Posterior vena cava (tissue), 2 donors: ENCODE measurements at regions of chr11 and their contacts with region 1.

Region 1: DNA sequence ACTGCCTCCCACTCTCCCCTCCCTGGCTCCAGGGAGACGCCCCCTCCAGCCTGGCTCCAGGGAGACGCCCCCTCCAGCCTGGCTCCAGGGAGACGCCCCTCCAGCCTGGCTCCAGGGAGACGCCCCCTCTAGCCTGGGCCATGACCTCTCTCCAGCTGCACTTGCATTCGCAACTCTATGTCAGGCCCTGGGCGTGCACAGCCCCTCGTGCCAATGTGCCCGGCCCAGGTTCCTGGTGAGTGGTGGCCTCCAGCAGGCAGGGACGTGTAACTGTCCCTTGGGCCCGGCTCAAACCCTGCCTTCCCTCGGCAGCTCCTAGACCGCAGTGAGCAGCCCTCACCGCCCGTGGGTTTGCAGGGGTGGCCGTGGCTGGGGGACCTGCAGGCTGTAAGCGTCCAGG is 6.9 kb downstream of the MUC6 start:
- DNase-seq: no peak

Region 2: GRCh38 chr11:952406-953385 is 77.0 kb before region 1 on chr11:
- intact Hi-C with region 1: no loop called
- DNase-seq: no peak

Region 3: GRCh38 chr11:1073261-1073724 is 43.6 kb after region 1 on chr11:
- intact Hi-C with region 1: no loop called
- DNase-seq: peak; percentile 85

Region 4: DNA sequence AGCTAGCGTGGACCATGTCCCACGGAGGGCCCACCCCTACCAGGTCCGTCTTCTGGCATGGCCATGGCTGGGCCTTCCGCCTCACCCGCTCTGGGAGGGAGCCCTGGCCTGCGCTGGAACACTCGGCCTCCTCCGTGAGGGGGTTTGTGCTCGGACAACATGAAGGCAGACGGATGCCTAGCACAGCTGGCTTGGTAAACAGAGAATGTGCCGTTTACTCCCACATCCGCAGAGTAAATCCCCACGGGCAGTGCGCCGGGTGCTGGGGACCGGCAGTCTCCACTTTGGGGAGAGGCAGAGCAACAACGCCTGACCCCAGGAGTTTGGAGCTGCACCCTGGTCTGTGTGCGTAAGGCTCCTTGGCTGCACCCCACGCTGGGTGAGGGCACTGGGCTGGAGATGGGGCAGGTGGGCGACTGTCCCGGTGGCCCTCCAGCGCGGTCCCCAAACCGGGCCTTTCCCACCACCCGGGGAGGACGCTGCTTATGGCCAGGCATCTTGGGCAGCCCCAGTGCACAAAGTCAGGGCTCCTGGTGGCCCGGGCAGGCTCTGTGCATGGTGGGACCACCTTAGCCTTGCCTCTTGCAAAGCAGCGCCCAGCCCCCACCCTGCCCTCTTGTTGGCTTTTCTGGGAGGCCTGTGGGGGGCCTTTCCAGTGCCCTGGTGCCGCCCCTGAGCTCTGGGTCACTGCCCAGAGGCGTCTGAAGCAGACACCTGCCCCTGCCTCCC is 97.4 kb after region 1 on chr11:
- intact Hi-C with region 1: loop called in 1 of 2 experiments (anchors 1 kb)
- DNase-seq: peak; percentile 74

Region 5: GRCh38 chr11:2298795-2299761 is 1269.4 kb after region 1 on chr11:
- intact Hi-C with region 1: no loop called
- DNase-seq: peak; percentile 66